Activated CD8-positive, alpha-beta T cell treated with anti-CD3 and anti-CD28 coated beads, Interleukin-2, amount 10 ng/mL, durations not matched to agents 7 days and 5 days (primary cell): ENCODE measurements at regions of chr6 and their contacts with region 1.

Region 1: DNA sequence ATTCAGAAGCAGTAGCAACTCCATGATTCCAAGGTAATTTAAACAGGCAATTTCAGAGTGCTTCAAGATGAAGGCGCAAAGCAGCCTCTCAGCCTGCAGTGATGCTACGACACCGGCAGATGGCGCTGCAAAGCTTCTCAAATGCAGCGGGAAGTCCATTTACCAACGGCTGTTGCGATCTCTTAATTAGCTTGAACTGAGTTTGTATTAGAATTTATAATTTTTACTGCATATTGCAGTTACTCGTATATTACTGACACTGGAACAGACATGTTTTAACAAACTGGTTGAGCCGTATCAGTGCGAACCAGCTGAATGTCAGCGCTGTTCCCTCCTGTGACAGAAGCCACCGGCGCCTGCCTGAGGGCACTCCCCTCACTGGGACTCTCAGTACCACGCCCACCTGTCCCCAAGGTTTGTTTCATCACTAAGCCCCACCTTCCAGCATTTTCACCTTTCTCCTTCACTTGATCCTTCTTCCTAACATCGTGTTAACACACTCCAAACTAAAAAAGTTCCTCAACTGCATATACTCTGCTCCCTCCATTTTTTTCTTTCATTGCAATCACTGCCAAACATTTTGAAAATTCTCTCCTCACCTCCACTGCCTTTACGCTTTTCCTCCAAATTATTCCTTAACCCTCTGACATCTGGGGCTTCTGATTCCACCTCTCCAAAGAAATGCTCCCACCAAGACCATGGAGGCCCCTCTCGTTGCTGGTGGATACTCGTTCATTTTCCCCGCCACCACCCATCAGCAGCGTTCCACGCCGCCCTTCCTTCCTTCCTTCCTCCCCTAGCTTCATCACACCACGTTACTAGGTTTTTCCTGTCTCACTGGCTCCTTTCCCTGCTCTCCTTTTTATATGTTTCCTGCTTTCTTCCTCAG is 14.5 kb downstream of the GNL1 start:
- DNase-seq: peak; percentile 88
- ATAC-seq: peak; percentile 82
- H3K4me3 Mint-ChIP-seq: peak overlapping the region; percentile 65
- H3K27ac Mint-ChIP-seq: peak overlapping the region; percentile 73
- H3K4me1 Mint-ChIP-seq: peaks cover 34% of the 10 kb centered on the region
- H3K27me3 Mint-ChIP-seq: peaks cover 5% of the 10 kb centered on the region

Region 2: DNA sequence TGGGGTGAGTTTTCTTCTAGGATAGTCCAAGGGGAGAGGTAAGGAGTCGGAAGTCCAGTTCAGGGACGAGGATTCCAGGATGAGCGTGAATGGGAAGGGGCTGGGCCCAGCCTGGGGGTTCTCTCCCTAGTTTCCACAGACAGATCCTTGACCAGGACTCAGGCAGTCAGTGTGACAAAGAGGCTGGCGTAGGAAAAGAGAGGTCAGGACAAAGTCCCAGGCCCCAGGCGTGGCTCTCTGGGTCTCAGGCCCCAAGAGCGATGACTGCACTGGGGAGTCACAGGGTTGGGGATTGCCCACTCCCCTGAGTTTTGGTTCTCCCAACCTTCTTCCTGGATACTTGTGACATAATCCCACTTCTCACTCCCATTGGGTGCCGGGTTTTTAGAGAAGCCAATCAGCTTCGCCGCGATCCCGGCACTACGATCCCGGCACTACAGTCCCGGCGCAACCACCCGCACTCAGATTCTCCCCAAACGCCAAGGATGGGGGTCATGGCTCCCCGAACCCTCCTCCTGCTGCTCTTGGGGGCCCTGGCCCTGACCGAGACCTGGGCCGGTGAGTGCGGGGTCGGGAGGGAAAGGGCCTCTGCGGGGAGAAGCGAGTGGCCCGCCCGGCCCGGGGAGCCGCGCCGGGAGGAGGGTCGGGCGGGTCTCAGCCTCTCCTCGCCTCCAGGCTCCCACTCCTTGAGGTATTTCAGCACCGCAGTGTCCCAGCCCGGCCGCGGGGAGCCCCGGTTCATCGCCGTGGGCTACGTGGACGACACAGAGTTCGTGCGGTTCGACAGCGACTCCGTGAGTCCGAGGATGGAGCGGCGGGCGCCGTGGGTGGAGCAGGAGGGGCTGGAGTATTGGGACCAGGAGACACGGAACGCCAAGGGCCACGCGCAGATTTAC is 282.4 kb before region 1 on chr6:
- CTCF ChIA-PET with region 1: no interaction called
- POLR2A ChIA-PET with region 1: no interaction called
- DNase-seq: peak; percentile 70
- ATAC-seq: peak; percentile 87
- H3K4me3 Mint-ChIP-seq: peak overlapping the region; percentile 82
- H3K27ac Mint-ChIP-seq: peak overlapping the region; percentile 66
- H3K4me1 Mint-ChIP-seq: peaks cover 21% of the 10 kb centered on the region
- H3K27me3 Mint-ChIP-seq: peaks cover 14% of the 10 kb centered on the region

Region 3: DNA sequence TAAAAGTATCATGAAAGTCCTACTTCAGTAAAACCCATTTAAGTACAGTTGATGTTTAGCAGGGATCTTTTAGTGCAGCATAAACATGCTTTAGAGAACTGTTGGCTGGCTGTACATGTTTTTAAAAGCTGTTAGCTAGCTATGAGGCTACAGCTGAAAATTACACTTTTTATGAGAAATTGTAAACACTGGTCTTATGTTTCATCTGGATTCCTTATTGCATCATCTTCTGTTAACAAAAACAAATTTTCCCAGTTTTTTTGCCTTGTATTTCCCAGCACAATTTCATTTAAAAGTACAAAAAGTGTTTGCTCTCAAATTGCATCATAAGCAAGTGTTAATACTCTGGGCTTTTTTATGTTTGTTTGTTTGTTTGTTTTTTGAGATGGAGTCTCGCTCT is 70.8 kb before region 1 on chr6:
- CTCF ChIA-PET with region 1: interaction called, 20 read pairs
- POLR2A ChIA-PET with region 1: no interaction called
- DNase-seq: no peak
- ATAC-seq: no peak
- H3K4me3 Mint-ChIP-seq: no peak overlapping the region
- H3K27ac Mint-ChIP-seq: no peak overlapping the region
- H3K4me1 Mint-ChIP-seq: peaks cover 9% of the 10 kb centered on the region
- H3K27me3 Mint-ChIP-seq: peaks cover 65% of the 10 kb centered on the region

Region 4: GRCh38 chr6:30508890-30509736 is 32.6 kb before region 1 on chr6:
- CTCF ChIA-PET with region 1: interaction called, 75 read pairs
- POLR2A ChIA-PET with region 1: interaction called, 3 read pairs
- DNase-seq: peak; percentile 68
- ATAC-seq: peak; percentile 75
- H3K4me3 Mint-ChIP-seq: peak overlapping the region; percentile 69
- H3K27ac Mint-ChIP-seq: peak overlapping the region; percentile 89
- H3K4me1 Mint-ChIP-seq: peaks cover 61% of the 10 kb centered on the region
- H3K27me3 Mint-ChIP-seq: no peaks in the 10 kb centered on the region

Region 5: GRCh38 chr6:30565772-30566171 is 24.0 kb after region 1 on chr6:
- CTCF ChIA-PET with region 1: interaction called, 44 read pairs
- POLR2A ChIA-PET with region 1: interaction called, 9 read pairs
- DNase-seq: no peak
- ATAC-seq: no peak
- H3K4me3 Mint-ChIP-seq: no peak overlapping the region
- H3K27ac Mint-ChIP-seq: no peak overlapping the region
- H3K4me1 Mint-ChIP-seq: peaks cover 17% of the 10 kb centered on the region
- H3K27me3 Mint-ChIP-seq: peaks cover 2% of the 10 kb centered on the region

Region 6: DNA sequence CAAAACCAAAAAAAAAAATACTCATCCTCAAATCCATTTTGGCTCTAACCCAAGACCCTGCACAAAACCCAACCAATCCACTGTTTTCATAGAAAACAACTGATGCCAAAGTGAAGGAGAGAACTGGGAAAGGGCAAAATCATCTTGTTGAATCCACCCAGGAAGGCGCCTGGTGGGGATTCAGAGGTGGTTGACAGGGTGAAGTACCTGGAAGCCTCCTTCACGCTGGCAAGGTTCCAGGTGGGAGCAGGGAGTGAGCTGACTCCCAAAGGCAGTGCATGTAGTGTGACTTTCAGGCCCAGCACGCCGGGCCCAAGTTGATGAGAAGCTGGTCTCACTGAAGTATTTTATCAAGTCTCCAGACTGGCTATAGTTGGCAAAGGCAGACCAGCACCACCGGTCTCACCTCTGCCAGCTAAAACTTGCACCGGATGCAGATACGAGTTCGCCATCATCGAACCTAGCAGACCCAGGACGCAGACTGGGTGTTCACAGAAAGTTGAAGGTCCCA is 58.7 kb after region 1 on chr6:
- CTCF ChIA-PET with region 1: interaction called, 119 read pairs
- POLR2A ChIA-PET with region 1: interaction called, 8 read pairs
- DNase-seq: no peak
- ATAC-seq: no peak
- H3K4me3 Mint-ChIP-seq: no peak overlapping the region
- H3K27ac Mint-ChIP-seq: no peak overlapping the region
- H3K4me1 Mint-ChIP-seq: peaks cover 18% of the 10 kb centered on the region
- H3K27me3 Mint-ChIP-seq: no peaks in the 10 kb centered on the region

Region 7: GRCh38 chr6:30691208-30691847 is 149.6 kb after region 1 on chr6:
- CTCF ChIA-PET with region 1: no interaction called
- POLR2A ChIA-PET with region 1: no interaction called
- DNase-seq: no peak
- ATAC-seq: no peak
- H3K4me3 Mint-ChIP-seq: peak overlapping the region; percentile 93
- H3K27ac Mint-ChIP-seq: peak overlapping the region; percentile 35
- H3K4me1 Mint-ChIP-seq: peaks cover 43% of the 10 kb centered on the region
- H3K27me3 Mint-ChIP-seq: no peaks in the 10 kb centered on the region

Region 8: DNA sequence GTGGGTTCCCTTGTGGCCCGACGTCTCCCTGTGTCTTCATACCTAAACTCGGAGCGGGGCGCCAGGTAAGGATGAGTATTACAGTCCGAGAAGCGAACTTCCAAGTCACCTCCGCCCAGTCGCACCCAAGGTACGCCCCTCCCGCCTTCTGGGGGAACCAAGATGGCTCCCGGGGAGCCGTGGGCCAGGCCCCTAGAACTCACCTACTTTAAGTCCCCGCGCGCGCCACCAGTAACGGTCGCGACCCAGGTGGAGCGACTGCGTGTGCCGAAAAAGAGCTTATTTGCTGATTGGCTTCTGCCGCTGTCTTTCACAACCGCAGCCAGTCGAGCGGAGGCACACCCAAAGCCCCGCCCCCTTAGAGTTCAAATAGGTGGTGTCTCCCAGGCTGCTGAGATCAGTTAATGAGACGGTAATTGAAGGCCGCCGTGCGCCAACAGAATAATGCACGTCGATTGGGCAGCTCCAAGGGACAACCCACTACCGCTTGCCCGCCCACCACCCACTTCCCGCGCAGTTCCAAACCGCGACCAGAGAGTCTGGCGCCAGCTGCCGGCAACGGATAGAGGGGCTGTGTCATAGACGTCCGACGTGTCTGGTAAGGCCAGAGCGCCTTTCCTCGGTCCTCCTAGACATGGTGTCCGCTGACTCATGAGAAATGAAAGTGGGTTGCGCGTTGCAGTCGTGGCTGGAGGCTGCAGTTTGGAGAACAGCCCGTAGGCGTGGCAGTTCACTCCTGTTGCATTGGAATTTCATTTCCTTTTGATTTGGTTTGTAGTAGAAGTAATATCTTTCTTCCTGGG is 175.5 kb after region 1 on chr6 and contains the start of gene MDC1:
- CTCF ChIA-PET with region 1: interaction called, 21 read pairs
- POLR2A ChIA-PET with region 1: no interaction called
- DNase-seq: peak; percentile 100
- ATAC-seq: peak; percentile 81
- H3K4me3 Mint-ChIP-seq: peak within 1 kb of the TSS; percentile 98
- H3K27ac Mint-ChIP-seq: peak within 1 kb of the TSS; percentile 100
- H3K4me1 Mint-ChIP-seq: peaks cover 64% of the 10 kb centered on the region
- H3K27me3 Mint-ChIP-seq: no peaks in the 10 kb centered on the region
- total RNA-seq, gene MDC1: 48.5 to 52.4 TPM

Region 9: GRCh38 chr6:30781743-30782424 is 240.1 kb after region 1 on chr6:
- CTCF ChIA-PET with region 1: no interaction called
- POLR2A ChIA-PET with region 1: no interaction called
- DNase-seq: no peak
- ATAC-seq: no peak
- H3K4me3 Mint-ChIP-seq: no peak overlapping the region
- H3K27ac Mint-ChIP-seq: peak overlapping the region; percentile 48
- H3K4me1 Mint-ChIP-seq: peaks cover 76% of the 10 kb centered on the region
- H3K27me3 Mint-ChIP-seq: no peaks in the 10 kb centered on the region